ENCODE measurements at regions of chr21 and their contacts with region 1.

Region 1: DNA sequence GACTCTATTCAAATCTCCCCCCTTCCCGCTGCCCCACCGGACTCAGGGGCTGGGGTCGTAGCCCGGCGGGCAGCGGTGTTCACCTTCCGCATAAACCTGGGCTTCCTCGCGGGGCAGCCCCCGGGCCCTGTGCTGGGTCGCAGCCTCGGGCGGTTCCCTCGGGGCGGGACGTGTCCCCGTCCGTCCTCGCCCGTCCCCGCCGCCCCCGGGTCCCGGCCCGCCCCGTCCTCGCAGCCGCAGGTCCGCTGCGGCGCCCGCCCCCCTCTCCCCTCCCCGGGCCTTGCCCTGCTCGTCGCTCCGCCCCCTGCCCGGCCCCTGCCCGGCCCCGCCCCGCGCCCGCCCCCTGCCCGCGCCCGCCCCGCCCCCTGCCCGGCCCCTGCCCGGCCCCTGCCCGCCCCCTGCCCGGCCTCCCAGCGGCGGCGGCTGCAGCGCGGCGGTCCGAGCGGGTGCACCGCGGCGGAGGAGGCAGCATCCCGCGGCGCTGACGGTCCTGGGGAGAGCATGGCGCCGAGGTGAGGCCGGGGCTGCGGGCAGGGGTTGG is at the start of gene COL18A1:
- DNase-seq: no peak
- ATAC-seq: peak; percentile 16
- H3K4me3 ChIP-seq: peak within 1 kb of the TSS; percentile 78 to 79 (median 79)
- H3K27ac ChIP-seq: peak within 1 kb of the TSS; percentile 80
- H3K4me1 ChIP-seq: peaks cover 47% of the 10 kb centered on the region
- H3K27me3 ChIP-seq: peaks cover 7 to 42% of the 10 kb centered on the region in 2 experiments
- CTCF ChIP-seq: no peak
- EP300 ChIP-seq: no peak
- POLR2A ChIP-seq: no peak; a peak in 1 of 4 replicates
- RAD21 ChIP-seq: no peak
- total RNA-seq, gene COL18A1: 21.2 and 102 TPM in 2 replicates

Region 2: DNA sequence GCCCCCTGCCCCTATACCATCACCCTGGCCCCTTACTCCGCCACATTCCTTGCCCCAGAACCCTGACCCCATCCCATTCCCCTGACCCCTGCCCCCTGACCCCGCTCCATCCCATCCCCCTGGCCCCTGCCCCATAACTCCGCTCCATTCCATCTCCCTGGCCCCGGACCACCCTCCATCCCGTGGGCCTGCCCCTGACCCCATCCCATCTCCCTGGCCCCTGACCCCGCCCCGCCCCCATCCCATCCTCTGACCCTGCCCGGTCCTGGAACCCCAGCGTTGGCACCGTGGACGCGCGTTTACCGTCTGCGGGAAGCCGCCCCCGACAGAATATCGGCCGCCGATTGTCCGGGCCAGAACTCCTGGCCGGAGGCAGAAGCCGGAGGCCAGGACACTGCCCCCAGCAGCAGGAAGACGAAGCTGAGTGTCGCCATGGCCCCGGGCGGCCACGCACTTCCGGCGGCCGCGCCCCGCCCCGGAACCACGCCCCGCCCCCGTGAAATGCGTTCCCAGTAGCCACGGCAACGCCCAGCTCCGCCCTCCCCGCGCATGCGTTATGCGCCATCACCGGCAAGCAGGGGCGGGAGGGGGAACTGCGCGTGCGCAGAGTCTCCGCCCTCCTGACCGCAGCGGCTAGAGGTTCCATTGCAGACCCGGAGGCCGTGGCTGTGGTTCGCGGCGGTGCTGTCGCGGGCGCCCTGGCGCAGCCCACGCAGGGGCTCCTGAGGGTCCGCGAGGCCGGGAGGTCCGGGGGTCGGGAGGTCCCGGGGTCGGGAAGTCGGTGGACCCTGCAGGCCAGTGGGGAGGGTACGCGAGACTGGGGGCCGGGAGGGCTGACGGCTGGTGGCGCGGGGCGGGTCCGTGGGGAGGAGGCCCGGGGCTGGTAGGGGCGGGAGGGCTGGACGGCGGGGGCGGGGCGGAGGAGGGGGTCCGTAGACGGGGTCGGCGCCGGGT is 117.1 kb before region 1 on chr21 and contains the start of gene POFUT2:
- CTCF ChIA-PET with region 1: no interaction called
- POLR2A ChIA-PET with region 1: interaction called, 13 read pairs
- in situ Hi-C with region 1: no loop called
- intact Hi-C with region 1: loop called (anchors 10 kb)
- DNase-seq: peak; percentile 86
- ATAC-seq: peak; percentile 73
- H3K4me3 ChIP-seq: peak within 1 kb of the TSS; percentile 81 to 95 (median 85)
- H3K27ac ChIP-seq: peak within 1 kb of the TSS; percentile 51
- H3K4me1 ChIP-seq: peaks cover 28% of the 10 kb centered on the region
- H3K27me3 ChIP-seq: no peaks in the 10 kb centered on the region
- CTCF ChIP-seq: no peak
- EP300 ChIP-seq: 0 out of 4 replicates have a peak, but pooled peaks of 1 of the 2 experiments have one; percentile 3
- POLR2A ChIP-seq: peak in 1 of 2 experiments; percentile 76; a peak in 2 of 4 replicates
- RAD21 ChIP-seq: no peak
- total RNA-seq, gene POFUT2: 9.8 and 24.0 TPM in 2 replicates

Region 3: GRCh38 chr21:45330075-45330781 is 74.6 kb before region 1 on chr21:
- CTCF ChIA-PET with region 1: no interaction called
- POLR2A ChIA-PET with region 1: interaction called, 15 read pairs
- in situ Hi-C with region 1: no loop called
- intact Hi-C with region 1: no loop called
- DNase-seq: peak; percentile 89
- ATAC-seq: peak; percentile 85
- H3K4me3 ChIP-seq: peak overlapping the region; percentile 25 to 72 (median 56); a peak in 5 of 6 replicates
- H3K27ac ChIP-seq: peak overlapping the region; percentile 72
- H3K4me1 ChIP-seq: peaks cover 79% of the 10 kb centered on the region
- H3K27me3 ChIP-seq: no peaks in the 10 kb centered on the region
- CTCF ChIP-seq: no peak
- EP300 ChIP-seq: peak in 1 of 2 experiments; percentile 70; a peak in 2 of 4 replicates
- POLR2A ChIP-seq: no peak; a peak in 1 of 4 replicates
- RAD21 ChIP-seq: peak; percentile 29; the same call in 1 of the 2 replicates

Region 4: GRCh38 chr21:45357436-45358260 is 47.2 kb before region 1 on chr21:
- CTCF ChIA-PET with region 1: no interaction called
- POLR2A ChIA-PET with region 1: interaction called, 10 read pairs
- in situ Hi-C with region 1: no loop called
- intact Hi-C with region 1: no loop called
- DNase-seq: no peak
- ATAC-seq: peak; percentile 17; the same call in 2 of the 3 replicates
- H3K4me3 ChIP-seq: no peak overlapping the region
- H3K27ac ChIP-seq: peak overlapping the region; percentile 82
- H3K4me1 ChIP-seq: peaks cover 68% of the 10 kb centered on the region
- H3K27me3 ChIP-seq: no peaks in the 10 kb centered on the region
- CTCF ChIP-seq: no peak
- EP300 ChIP-seq: no peak
- POLR2A ChIP-seq: no peak
- RAD21 ChIP-seq: 0 out of 2 replicates have a peak, but pooled peaks have one; percentile 12

Region 5: DNA sequence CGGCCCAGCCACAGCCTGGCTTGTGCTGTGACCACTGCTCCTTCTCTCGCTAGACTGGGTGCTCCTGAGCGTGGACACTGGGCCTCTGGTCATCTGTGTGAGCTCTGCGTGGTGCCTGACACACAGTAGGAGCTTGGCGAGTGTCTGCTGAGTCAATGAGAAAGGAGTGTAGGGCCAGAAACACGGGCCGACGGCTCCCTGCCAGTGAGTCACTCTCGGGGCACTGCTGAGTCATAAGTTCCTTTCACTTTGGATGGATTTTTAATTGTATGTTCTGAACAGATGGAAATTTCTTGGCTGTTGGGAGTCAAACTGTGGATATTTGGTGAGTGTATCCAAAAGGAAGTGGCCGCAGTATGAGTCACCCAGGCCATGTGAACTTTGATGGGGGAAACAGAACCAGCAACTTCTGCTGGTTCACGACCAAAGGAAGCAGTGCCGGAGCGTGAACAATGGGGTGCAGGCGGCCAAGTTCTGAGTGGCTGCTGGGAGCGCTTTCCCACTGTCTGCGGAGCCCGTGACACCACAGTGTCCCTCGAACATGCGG is 40.8 kb before region 1 on chr21:
- CTCF ChIA-PET with region 1: no interaction called
- POLR2A ChIA-PET with region 1: interaction called, 4 read pairs
- in situ Hi-C with region 1: no loop called
- intact Hi-C with region 1: loop called (anchors 2 kb)
- DNase-seq: peak; percentile 82
- ATAC-seq: no peak
- H3K4me3 ChIP-seq: no peak overlapping the region
- H3K27ac ChIP-seq: peak overlapping the region; percentile 59
- H3K4me1 ChIP-seq: peaks cover 84% of the 10 kb centered on the region
- H3K27me3 ChIP-seq: no peaks in the 10 kb centered on the region
- CTCF ChIP-seq: no peak
- EP300 ChIP-seq: peak in 1 of 2 experiments; percentile 20; a peak in 1 of 4 replicates
- POLR2A ChIP-seq: no peak
- RAD21 ChIP-seq: no peak

Region 6: GRCh38 chr21:45427331-45428271 is 22.8 kb after region 1 on chr21:
- CTCF ChIA-PET with region 1: no interaction called
- POLR2A ChIA-PET with region 1: interaction called, 210 read pairs
- in situ Hi-C with region 1: no loop called
- intact Hi-C with region 1: loop called (anchors 2 kb)
- DNase-seq: peak; percentile 93
- ATAC-seq: peak; percentile 67
- H3K4me3 ChIP-seq: peak overlapping the region in 2 of 3 experiments; percentile 31 to 42; a peak in 1 of 6 replicates
- H3K27ac ChIP-seq: peak overlapping the region; percentile 88
- H3K4me1 ChIP-seq: peaks cover 94% of the 10 kb centered on the region
- H3K27me3 ChIP-seq: no peaks in the 10 kb centered on the region
- CTCF ChIP-seq: peak; percentile 36; the same call in 1 of the 2 replicates
- EP300 ChIP-seq: peak in 1 of 2 experiments; percentile 64; a peak in 1 of 4 replicates
- POLR2A ChIP-seq: no peak
- RAD21 ChIP-seq: no peak

Region 7: GRCh38 chr21:45432575-45433255 is 27.9 kb after region 1 on chr21:
- CTCF ChIA-PET with region 1: no interaction called
- POLR2A ChIA-PET with region 1: interaction called, 210 read pairs
- in situ Hi-C with region 1: no loop called
- intact Hi-C with region 1: loop called (anchors 2 kb)
- DNase-seq: peak; percentile 79
- ATAC-seq: peak; percentile 5; the same call in 1 of the 3 replicates
- H3K4me3 ChIP-seq: peak overlapping the region in 1 of 3 experiments; percentile 22; a peak in 1 of 6 replicates
- H3K27ac ChIP-seq: peak overlapping the region; percentile 34
- H3K4me1 ChIP-seq: peaks cover 78% of the 10 kb centered on the region
- H3K27me3 ChIP-seq: no peaks in the 10 kb centered on the region
- CTCF ChIP-seq: no peak
- EP300 ChIP-seq: peak in 1 of 2 experiments; percentile 90; a peak in 2 of 4 replicates
- POLR2A ChIP-seq: no peak
- RAD21 ChIP-seq: no peak

Measured in HepG2 (cell line).